ENCODE measurements at regions of chr17 and their contacts with region 1.

Region 1: DNA sequence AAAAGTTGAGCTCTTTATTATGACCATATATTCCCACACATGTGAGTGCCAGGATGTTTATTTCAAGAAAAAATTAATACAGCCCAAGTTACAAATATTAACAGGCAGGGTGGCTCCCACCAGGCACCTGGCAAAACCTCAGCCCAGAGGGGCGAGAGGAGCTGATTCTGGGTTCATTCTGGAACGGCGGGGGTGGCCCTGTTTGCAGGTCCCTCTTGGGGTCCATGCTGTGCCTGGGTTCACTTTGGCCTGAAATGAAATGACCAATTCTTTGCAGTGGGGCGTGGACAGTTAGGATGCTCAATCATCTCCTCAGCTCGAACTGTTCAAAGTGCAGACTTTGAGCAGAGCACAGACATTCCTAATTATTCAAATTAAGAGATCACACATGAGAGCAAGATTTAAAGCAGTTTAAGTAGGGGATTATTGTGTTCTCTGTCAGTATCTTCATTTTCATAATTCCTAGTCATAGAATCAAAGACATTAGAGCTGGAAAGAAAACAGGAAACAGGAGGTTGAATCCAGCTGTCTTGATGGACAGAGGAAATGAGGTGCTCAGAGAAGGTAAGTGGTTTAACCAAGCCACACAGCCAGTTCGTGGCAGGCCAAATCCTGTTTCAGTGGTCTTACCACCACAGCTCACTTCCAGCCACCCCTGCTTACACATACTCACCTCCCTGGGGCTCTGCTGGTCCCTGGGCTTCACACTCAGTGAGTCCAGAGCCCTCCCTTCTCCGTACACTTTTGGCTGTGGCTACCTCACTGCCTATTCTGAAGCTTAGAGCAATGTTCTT is 363.9 kb upstream of the TNRC6C start:
- DNase-seq: no peak
- ATAC-seq: no peak
- H3K4me3 ChIP-seq: no peak overlapping the region
- H3K27ac ChIP-seq: no peak overlapping the region
- H3K4me1 ChIP-seq: no peaks in the 10 kb centered on the region
- H3K27me3 ChIP-seq: peaks cover 0 to 8% (median 3%) of the 10 kb centered on the region in 3 donors
- CTCF ChIP-seq: no peak

Region 2: GRCh38 chr17:77535435-77535834 is 59.2 kb before region 1 on chr17:
- intact Hi-C with region 1: no loop called
- DNase-seq: peak in 1 of 2 donors; percentile 6
- ATAC-seq: no peak
- H3K4me3 ChIP-seq: no peak overlapping the region
- H3K27ac ChIP-seq: no peak overlapping the region
- H3K4me1 ChIP-seq: no peaks in the 10 kb centered on the region
- H3K27me3 ChIP-seq: peaks cover 0 to 3% (median 0%) of the 10 kb centered on the region in 3 donors
- CTCF ChIP-seq: no peak

Region 3: GRCh38 chr17:77555741-77556291 is 38.8 kb before region 1 on chr17:
- intact Hi-C with region 1: loop called in 1 of 2 experiments (anchors 5 kb)
- DNase-seq: peak; percentile 30 to 61
- ATAC-seq: peak; percentile 9 to 48 (median 27)
- H3K4me3 ChIP-seq: peak overlapping the region; percentile 47
- H3K27ac ChIP-seq: no peak overlapping the region
- H3K4me1 ChIP-seq: peaks cover 12% of the 10 kb centered on the region
- H3K27me3 ChIP-seq: no peaks in the 10 kb centered on the region
- CTCF ChIP-seq: no peak

Measured in psoas muscle (tissue), 8 donors.